GM12878 (cell line): ENCODE measurements at regions of chr1 and their contacts with region 1.

Region 1: DNA sequence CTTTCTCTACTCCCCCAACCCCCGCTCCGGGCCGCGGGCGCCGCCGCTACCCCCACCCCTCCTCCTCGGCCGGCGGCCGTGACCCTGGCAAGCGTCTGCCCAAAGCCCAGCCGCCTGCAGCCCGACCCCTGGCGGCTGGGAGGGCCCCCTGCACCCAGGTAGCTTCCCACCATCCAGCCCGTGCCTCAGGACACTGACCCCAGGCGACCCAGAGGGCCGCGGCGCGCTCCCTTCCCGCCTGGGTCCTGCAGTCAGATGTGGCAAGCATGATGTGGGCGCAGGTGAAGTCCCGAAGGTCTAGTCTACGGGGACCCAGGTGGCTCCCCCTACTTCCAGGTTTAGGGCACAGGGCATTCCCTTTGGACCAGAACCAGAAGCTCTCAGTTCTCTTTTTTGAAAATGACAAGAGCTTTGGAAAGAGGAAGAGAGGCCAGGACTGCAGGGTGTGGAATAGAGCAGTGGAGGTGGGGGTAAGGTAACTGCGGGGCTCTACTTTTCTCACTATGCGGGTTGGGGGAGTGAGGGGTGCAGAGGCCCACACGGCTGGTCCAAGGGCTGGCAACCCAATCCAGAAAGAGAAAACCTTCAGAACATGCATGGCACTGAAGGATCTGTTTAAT is at the start of gene DENND4B:
- DNase-seq: no peak
- ATAC-seq: peak; percentile 80
- H3K4me3 ChIP-seq: peak within 1 kb of the TSS; percentile 100
- H3K27ac ChIP-seq: peak within 1 kb of the TSS; percentile 95
- H3K4me1 ChIP-seq: peaks cover 21% of the 10 kb centered on the region
- H3K27me3 ChIP-seq: no peaks in the 10 kb centered on the region
- CTCF ChIP-seq: peak; percentile 78 to 95 (median 90)
- EP300 ChIP-seq: no peak
- POLR2A ChIP-seq: peak; percentile 41
- RAD21 ChIP-seq: peak; percentile 65
- polyA plus RNA-seq, gene DENND4B: 12.0 to 13.4 TPM

Region 2: GRCh38 chr1:153796791-153797659 is 149.7 kb before region 1 on chr1:
- CTCF ChIA-PET with region 1: interaction called, 29 read pairs
- POLR2A ChIA-PET with region 1: interaction called, 4 read pairs
- RAD21 ChIA-PET with region 1: interaction called, 10 read pairs
- SMC1A ChIA-PET with region 1: interaction called, 4 read pairs
- in situ Hi-C with region 1: no loop called
- intact Hi-C with region 1: loop called (anchors 1 kb)
- DNase-seq: no peak
- ATAC-seq: peak; percentile 93
- H3K4me3 ChIP-seq: no peak overlapping the region
- H3K27ac ChIP-seq: no peak overlapping the region
- H3K4me1 ChIP-seq: peaks cover 6% of the 10 kb centered on the region
- H3K27me3 ChIP-seq: no peaks in the 10 kb centered on the region
- CTCF ChIP-seq: peak; percentile 81 to 90 (median 86)
- EP300 ChIP-seq: no peak
- POLR2A ChIP-seq: no peak
- RAD21 ChIP-seq: peak; percentile 88

Region 3: GRCh38 chr1:153816283-153816889 is 130.3 kb before region 1 on chr1:
- CTCF ChIA-PET with region 1: interaction called, 21 read pairs
- POLR2A ChIA-PET with region 1: no interaction called
- RAD21 ChIA-PET with region 1: interaction called, 25 read pairs
- SMC1A ChIA-PET with region 1: interaction called, 18 read pairs
- in situ Hi-C with region 1: no loop called
- intact Hi-C with region 1: no loop called
- DNase-seq: no peak
- ATAC-seq: no peak
- H3K4me3 ChIP-seq: no peak overlapping the region
- H3K27ac ChIP-seq: no peak overlapping the region
- H3K4me1 ChIP-seq: no peaks in the 10 kb centered on the region; the same call in 1 of the 2 replicates
- H3K27me3 ChIP-seq: no peaks in the 10 kb centered on the region
- CTCF ChIP-seq: no peak
- EP300 ChIP-seq: no peak
- POLR2A ChIP-seq: no peak
- RAD21 ChIP-seq: no peak

Region 4: DNA sequence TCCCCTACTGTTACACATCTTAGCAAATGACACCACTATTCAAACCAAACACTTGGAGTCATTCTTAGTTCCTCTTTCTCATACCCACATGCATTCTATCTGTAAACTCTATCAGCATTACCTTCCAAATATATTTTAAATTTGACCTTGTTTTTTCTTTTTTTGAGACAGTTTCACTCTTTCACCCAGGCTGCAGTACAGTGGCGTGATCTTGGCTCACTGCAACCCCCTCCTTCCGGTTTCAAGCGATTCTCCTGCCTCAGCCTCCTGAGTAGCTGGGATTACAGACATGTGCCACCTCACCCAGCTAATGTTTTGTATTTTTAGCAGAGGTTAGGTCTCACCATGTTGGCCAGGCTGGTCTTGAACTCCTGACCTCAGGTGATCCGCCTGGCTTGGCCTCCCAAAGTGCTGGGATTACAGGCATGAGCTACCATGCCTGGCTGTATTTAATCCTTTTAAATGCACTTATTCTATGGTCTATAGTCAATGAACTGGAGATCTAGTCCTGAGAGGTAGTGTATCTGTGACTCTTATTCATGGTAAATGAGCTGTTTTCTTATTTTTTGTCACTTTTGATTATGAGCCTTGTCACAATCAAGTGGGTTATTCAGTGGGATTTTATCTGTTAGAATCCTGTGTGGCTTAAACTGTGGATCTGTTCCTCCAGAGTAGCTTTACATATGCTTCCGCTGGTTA is 97.1 kb before region 1 on chr1:
- CTCF ChIA-PET with region 1: interaction called, 4 read pairs
- POLR2A ChIA-PET with region 1: no interaction called
- RAD21 ChIA-PET with region 1: interaction called, 11 read pairs
- SMC1A ChIA-PET with region 1: interaction called, 5 read pairs
- in situ Hi-C with region 1: no loop called
- intact Hi-C with region 1: no loop called
- DNase-seq: peak; percentile 78
- ATAC-seq: peak; percentile 92
- H3K4me3 ChIP-seq: 0 out of 2 replicates have a peak overlapping the region, but pooled peaks have one; percentile 4
- H3K27ac ChIP-seq: peak overlapping the region; percentile 70
- H3K4me1 ChIP-seq: peaks cover 46% of the 10 kb centered on the region
- H3K27me3 ChIP-seq: no peaks in the 10 kb centered on the region
- CTCF ChIP-seq: no peak
- EP300 ChIP-seq: peak in 1 of 2 experiments; percentile 20; a peak in 1 of 4 replicates
- POLR2A ChIP-seq: no peak
- RAD21 ChIP-seq: no peak

Region 5: GRCh38 chr1:153872934-153873333 is 73.8 kb before region 1 on chr1:
- CTCF ChIA-PET with region 1: no interaction called
- POLR2A ChIA-PET with region 1: no interaction called
- RAD21 ChIA-PET with region 1: no interaction called
- SMC1A ChIA-PET with region 1: no interaction called
- in situ Hi-C with region 1: no loop called
- intact Hi-C with region 1: no loop called
- DNase-seq: no peak
- ATAC-seq: no peak
- H3K4me3 ChIP-seq: no peak overlapping the region
- H3K27ac ChIP-seq: no peak overlapping the region
- H3K4me1 ChIP-seq: no peaks in the 10 kb centered on the region; the same call in 1 of the 2 replicates
- H3K27me3 ChIP-seq: no peaks in the 10 kb centered on the region
- CTCF ChIP-seq: no peak
- EP300 ChIP-seq: no peak
- POLR2A ChIP-seq: no peak
- RAD21 ChIP-seq: no peak

Region 6: DNA sequence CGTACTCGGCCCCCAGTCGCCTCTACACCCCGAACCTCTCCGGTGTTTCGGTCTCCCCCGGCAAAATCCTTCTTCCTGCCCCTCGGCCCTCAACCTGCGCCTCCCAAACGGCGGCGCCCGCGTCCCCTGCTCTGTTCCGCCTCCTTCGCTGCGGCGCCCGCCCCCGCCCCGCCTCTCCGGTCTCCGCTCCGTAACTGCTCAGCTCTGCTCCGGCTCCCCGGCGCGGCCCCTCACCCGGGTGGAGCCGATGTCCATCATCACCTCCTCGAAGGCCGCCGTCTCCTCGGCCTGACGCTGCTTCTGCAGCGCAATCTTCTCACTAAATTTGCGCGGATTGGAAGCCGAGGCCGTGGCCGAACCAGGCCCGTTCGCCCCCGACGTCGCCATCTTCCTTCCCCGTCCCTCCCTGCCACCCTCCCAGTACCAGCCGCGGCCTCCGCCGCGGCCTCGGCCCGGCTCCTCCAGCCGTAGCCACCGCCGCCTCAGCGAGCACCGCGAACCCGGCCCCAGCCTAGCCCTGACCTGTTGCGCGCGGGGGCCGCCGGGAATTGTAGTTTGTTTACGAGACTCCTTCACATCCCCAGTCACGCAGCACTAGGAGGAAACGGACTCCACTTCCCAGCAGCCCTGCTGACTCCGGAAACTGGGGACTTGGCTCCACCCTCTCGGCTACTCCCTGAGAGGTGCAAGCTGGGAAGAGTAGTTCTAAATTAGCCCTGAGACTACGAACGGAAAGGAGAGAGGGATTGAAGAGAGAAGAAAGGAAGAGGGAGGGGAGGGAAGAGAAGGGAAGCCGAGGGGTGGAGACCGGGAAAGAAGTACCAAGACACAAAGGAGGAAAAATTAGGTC is 11.6 kb after region 1 on chr1 and contains the start of gene CRTC2:
- CTCF ChIA-PET with region 1: interaction called, 53 read pairs
- POLR2A ChIA-PET with region 1: interaction called, 43 read pairs
- RAD21 ChIA-PET with region 1: interaction called, 22 read pairs
- SMC1A ChIA-PET with region 1: interaction called, 23 read pairs
- in situ Hi-C with region 1: no loop called
- intact Hi-C with region 1: no loop called
- DNase-seq: peak; percentile 91
- ATAC-seq: peak; percentile 86
- H3K4me3 ChIP-seq: peak within 1 kb of the TSS; percentile 89
- H3K27ac ChIP-seq: peak within 1 kb of the TSS; percentile 93
- H3K4me1 ChIP-seq: peaks cover 14% of the 10 kb centered on the region; the same call in 1 of the 2 replicates
- H3K27me3 ChIP-seq: no peaks in the 10 kb centered on the region
- CTCF ChIP-seq: 0 out of 6 replicates have a peak, but pooled peaks of 1 of the 3 experiments have one; percentile 4
- EP300 ChIP-seq: 0 out of 4 replicates have a peak, but pooled peaks of 1 of the 2 experiments have one; percentile 29
- POLR2A ChIP-seq: peak; percentile 76
- RAD21 ChIP-seq: no peak
- polyA plus RNA-seq, gene CRTC2: 5.1 to 8.4 TPM

Region 7: GRCh38 chr1:153977250-153978240 is 30.8 kb after region 1 on chr1 and contains the start of gene JTB:
- CTCF ChIA-PET with region 1: interaction called, 7 read pairs
- POLR2A ChIA-PET with region 1: interaction called, 23 read pairs
- RAD21 ChIA-PET with region 1: interaction called, 20 read pairs
- SMC1A ChIA-PET with region 1: interaction called, 4 read pairs
- in situ Hi-C with region 1: no loop called
- intact Hi-C with region 1: no loop called
- DNase-seq: no peak
- ATAC-seq: peak; percentile 95
- H3K4me3 ChIP-seq: peak within 1 kb of the TSS; percentile 87
- H3K27ac ChIP-seq: peak within 1 kb of the TSS; percentile 86
- H3K4me1 ChIP-seq: peaks cover 7% of the 10 kb centered on the region
- H3K27me3 ChIP-seq: no peaks in the 10 kb centered on the region
- CTCF ChIP-seq: no peak
- EP300 ChIP-seq: no peak
- POLR2A ChIP-seq: peak; percentile 95
- RAD21 ChIP-seq: no peak
- polyA plus RNA-seq, gene JTB: 25.0 to 67.7 TPM

Region 8: GRCh38 chr1:154075746-154076145 is 129.0 kb after region 1 on chr1:
- CTCF ChIA-PET with region 1: no interaction called
- POLR2A ChIA-PET with region 1: no interaction called
- RAD21 ChIA-PET with region 1: no interaction called
- SMC1A ChIA-PET with region 1: no interaction called
- in situ Hi-C with region 1: no loop called
- intact Hi-C with region 1: no loop called
- DNase-seq: no peak
- ATAC-seq: no peak
- H3K4me3 ChIP-seq: no peak overlapping the region
- H3K27ac ChIP-seq: no peak overlapping the region
- H3K4me1 ChIP-seq: no peaks in the 10 kb centered on the region
- H3K27me3 ChIP-seq: no peaks in the 10 kb centered on the region
- CTCF ChIP-seq: no peak
- EP300 ChIP-seq: no peak
- POLR2A ChIP-seq: no peak
- RAD21 ChIP-seq: no peak